ENCODE measurements at regions of chr5 and their contacts with region 1.

Region 1: DNA sequence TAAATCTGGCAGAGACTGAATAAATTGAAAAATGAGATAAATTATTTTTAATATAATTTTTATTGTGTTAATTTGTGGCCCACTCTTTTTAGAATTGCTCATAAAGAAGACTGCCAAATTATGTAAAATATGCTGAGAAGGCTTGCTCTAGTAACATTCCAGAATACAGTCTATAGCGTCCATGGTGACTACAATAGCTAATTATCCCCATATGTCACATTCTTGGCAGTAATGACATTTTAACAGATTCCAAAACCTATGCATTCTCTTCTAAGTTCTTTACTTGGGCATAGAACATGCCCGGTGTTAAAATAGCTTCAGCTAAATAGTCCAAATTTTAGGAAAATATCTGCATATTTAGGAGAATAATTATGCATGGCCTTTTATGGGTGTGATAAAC is 697.0 kb upstream of the SEMA6A start:
- DNase-seq: no peak
- ATAC-seq: no peak

Region 2: DNA sequence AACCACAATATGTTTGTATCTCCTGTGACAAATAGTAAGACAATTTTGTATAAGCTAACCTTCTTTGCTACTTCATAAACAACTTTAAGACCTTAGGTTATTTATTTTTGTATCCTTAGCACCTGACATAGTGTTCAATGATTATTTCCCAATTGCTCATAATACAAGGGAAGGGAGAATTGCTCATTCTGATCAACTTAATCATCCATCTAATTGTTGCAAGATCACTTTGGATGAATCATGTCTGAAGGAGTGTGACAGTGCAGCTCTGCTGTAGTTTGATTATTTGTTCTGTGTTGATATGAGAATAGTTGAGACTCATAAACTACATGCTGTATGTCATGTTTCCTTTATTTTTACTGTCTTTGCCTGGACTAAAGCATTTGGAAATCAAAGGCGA is 24.3 kb after region 1 on chr5:
- intact Hi-C with region 1: loop called (anchors 2 kb)
- DNase-seq: no peak
- ATAC-seq: no peak